WTC11 (cell line): ENCODE measurements at regions of chr4 and their contacts with region 1.

Region 1: GRCh38 chr4:82739316-82740179 is 59.0 kb downstream of the SCD5 start:
- DNase-seq: peak; percentile 94
- ATAC-seq: peak; percentile 98
- H3K4me3 Mint-ChIP-seq: peak overlapping the region; percentile 36; the same call in 1 of the 2 replicates
- H3K27ac Mint-ChIP-seq: no peak overlapping the region
- H3K4me1 Mint-ChIP-seq: peaks cover 5% of the 10 kb centered on the region
- H3K27me3 Mint-ChIP-seq: no peaks in the 10 kb centered on the region
- CTCF ChIP-seq: peak; percentile 100

Region 2: GRCh38 chr4:82462415-82462831 is 277.1 kb before region 1 on chr4:
- CTCF ChIA-PET with region 1: interaction called, 49 read pairs
- POLR2A ChIA-PET with region 1: no interaction called
- DNase-seq: peak; percentile 93
- ATAC-seq: peak; percentile 96
- H3K4me3 Mint-ChIP-seq: no peak overlapping the region
- H3K27ac Mint-ChIP-seq: no peak overlapping the region
- H3K4me1 Mint-ChIP-seq: no peaks in the 10 kb centered on the region
- H3K27me3 Mint-ChIP-seq: no peaks in the 10 kb centered on the region
- CTCF ChIP-seq: peak; percentile 85

Region 3: GRCh38 chr4:82721819-82722423 is 17.6 kb before region 1 on chr4:
- CTCF ChIA-PET with region 1: interaction called, 12 read pairs
- POLR2A ChIA-PET with region 1: no interaction called
- DNase-seq: no peak
- ATAC-seq: peak; percentile 53
- H3K4me3 Mint-ChIP-seq: no peak overlapping the region
- H3K27ac Mint-ChIP-seq: no peak overlapping the region
- H3K4me1 Mint-ChIP-seq: no peaks in the 10 kb centered on the region
- H3K27me3 Mint-ChIP-seq: no peaks in the 10 kb centered on the region; the same call in 1 of the 2 replicates
- CTCF ChIP-seq: no peak

Region 4: GRCh38 chr4:82758701-82759685 is 19.4 kb after region 1 on chr4:
- CTCF ChIA-PET with region 1: interaction called, 11 read pairs
- POLR2A ChIA-PET with region 1: no interaction called
- DNase-seq: no peak
- ATAC-seq: peak; percentile 70
- H3K4me3 Mint-ChIP-seq: no peak overlapping the region
- H3K27ac Mint-ChIP-seq: no peak overlapping the region
- H3K4me1 Mint-ChIP-seq: peaks cover 8% of the 10 kb centered on the region
- H3K27me3 Mint-ChIP-seq: no peaks in the 10 kb centered on the region; the same call in 1 of the 2 replicates
- CTCF ChIP-seq: no peak

Region 5: DNA sequence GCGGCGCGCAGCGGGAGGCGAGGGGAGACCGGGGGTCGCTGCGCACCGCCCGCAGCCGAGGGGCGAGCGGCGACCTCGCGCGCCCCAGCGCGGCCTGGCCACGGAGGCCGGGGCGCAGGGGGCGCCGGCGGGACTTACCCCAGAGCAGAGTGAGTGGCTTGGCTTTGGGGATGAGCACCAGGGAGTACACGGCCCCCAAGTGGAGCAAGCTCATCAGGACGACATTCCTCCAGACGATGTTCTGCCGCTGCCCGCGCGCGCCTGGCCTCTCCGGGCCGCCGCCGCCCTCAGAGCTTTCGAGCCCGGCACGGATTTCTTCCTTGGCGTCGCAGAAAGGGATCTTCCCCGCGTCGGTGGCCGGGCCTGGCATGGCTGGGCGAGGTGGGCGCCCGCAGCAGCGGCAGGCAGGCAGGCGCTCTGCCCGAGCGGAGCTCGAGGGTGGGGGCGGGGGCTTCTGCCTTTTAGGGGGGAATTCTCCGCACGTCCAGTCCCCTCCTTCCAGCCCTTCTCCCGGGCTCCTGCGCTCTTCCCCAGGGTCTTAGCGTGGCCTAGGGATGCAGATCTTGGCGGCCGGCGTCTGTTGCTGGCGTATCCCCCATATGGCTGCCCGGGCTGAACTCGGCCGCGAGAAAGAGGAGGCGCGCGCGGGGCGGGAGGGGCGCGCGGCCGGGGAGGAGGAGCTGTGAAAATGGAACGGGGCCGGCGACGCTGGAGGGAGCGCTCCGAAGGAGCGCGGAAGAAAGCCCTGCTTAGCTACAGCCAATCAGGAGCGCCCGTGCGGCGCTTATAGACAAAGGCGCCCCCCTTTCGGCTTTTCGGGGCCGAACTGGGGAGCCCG is 58.8 kb after region 1 on chr4 and contains the start of gene SCD5:
- CTCF ChIA-PET with region 1: interaction called, 17 read pairs
- POLR2A ChIA-PET with region 1: no interaction called
- DNase-seq: peak; percentile 60
- ATAC-seq: peak; percentile 75
- H3K4me3 Mint-ChIP-seq: peak within 1 kb of the TSS; percentile 86
- H3K27ac Mint-ChIP-seq: no peak within 1 kb of the TSS
- H3K4me1 Mint-ChIP-seq: peaks cover 24% of the 10 kb centered on the region
- H3K27me3 Mint-ChIP-seq: peaks cover 94% of the 10 kb centered on the region
- CTCF ChIP-seq: no peak
- total RNA-seq, gene SCD5: 4.6 to 6.3 TPM (median 4.9 TPM) in 3 replicates

Region 6: GRCh38 chr4:83043801-83044407 is 304.4 kb after region 1 on chr4:
- CTCF ChIA-PET with region 1: no interaction called
- POLR2A ChIA-PET with region 1: no interaction called
- DNase-seq: no peak
- ATAC-seq: no peak
- H3K4me3 Mint-ChIP-seq: no peak overlapping the region
- H3K27ac Mint-ChIP-seq: no peak overlapping the region
- H3K4me1 Mint-ChIP-seq: peaks cover 3% of the 10 kb centered on the region; the same call in 1 of the 2 replicates
- H3K27me3 Mint-ChIP-seq: no peaks in the 10 kb centered on the region
- CTCF ChIP-seq: no peak